Activated CD4-positive, alpha-beta memory T cell treated with anti-CD3 and anti-CD28 coated beads, Interleukin-2, amount 10 ng/mL, durations not matched to agents 7 days and 5 days (primary cell): ENCODE measurements at regions of chr13 and their contacts with region 1.

Region 1: DNA sequence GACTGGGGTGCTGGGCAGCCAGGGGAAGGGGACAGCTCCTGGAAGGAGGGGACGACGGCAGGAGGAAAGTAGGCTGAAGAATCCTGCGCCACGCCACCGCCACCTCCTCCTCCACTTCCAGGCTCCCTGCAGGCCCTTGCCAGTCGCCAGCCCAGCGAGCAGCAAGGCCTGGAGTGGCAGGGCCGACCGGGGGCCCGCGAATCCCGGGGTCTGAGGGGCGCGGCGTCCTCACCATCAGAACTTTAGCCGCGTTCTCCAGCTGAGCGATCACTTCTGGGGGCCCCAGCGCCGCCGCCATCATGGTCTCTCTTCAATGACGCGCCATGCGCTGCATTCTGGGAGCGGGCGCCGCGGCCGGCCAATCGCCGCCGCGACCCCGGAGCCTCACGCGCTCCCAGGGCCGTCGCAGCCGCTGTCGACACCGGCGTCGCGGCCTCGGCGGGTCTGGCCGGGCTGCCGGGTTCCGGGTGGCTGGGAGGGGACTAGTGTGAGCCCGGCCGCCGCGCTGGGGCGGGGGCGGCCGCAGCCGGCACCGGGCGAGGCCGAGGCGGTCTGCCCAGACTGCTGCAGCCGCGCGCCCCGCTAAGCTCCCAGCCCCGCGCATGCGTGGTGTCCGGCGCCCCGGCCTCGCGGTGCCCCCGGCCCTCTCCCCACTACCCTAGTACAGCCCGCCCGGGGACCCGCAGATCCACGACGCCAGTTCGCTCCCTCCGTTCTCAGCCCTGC is at the start of gene XPO4:
- DNase-seq: peak; percentile 86
- H3K4me3 Mint-ChIP-seq: peak within 1 kb of the TSS; percentile 92
- H3K27ac Mint-ChIP-seq: peak within 1 kb of the TSS; percentile 89
- H3K4me1 Mint-ChIP-seq: peaks cover 36% of the 10 kb centered on the region
- H3K27me3 Mint-ChIP-seq: no peaks in the 10 kb centered on the region
- total RNA-seq, gene XPO4: 16.4 to 16.8 TPM

Region 2: DNA sequence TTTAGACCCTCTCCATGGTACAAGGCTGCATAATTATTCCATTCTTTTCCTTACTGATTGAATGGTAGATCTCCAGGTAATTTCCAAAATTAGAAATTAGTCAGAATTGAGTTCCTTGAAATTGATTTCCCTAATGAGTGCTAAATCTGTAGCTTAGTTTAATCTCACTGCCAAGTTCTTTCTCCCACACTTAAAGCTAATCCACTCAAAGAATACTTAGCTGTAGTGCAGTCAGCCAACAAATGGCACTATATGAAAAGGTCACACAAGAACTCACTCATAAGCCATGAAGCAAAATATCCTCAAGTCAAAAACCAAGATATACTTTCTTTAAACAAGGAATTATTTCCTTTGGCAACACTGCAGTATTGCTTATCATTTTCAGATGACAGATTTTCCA is 62.0 kb before region 1 on chr13:
- CTCF ChIA-PET with region 1: no interaction called
- POLR2A ChIA-PET with region 1: no interaction called
- DNase-seq: no peak
- H3K4me3 Mint-ChIP-seq: no peak overlapping the region
- H3K27ac Mint-ChIP-seq: no peak overlapping the region
- H3K4me1 Mint-ChIP-seq: peaks cover 3% of the 10 kb centered on the region
- H3K27me3 Mint-ChIP-seq: no peaks in the 10 kb centered on the region

Region 3: DNA sequence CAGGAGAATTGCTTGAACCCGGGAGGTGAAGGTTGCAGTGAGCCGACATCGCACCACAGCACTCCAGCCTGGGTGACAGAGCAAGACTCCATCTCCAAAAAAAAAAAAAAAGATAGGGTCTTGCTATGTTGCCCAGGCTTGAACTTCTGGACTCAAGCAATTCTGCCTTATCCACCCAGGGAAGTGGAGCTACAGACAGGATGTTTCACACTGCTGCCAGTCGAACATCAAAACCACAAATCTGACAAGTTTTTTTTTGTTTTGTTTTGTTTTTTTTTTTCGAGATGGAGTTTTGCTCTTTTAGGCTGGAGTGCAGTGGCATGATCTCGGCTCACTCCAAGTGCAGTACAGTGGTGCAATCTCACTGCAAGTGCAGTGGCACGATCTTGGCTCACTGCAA is 10.8 kb before region 1 on chr13:
- CTCF ChIA-PET with region 1: interaction called, 5 read pairs
- POLR2A ChIA-PET with region 1: interaction called, 31 read pairs
- DNase-seq: no peak
- H3K4me3 Mint-ChIP-seq: no peak overlapping the region
- H3K27ac Mint-ChIP-seq: peak overlapping the region; percentile 12
- H3K4me1 Mint-ChIP-seq: peaks cover 18% of the 10 kb centered on the region
- H3K27me3 Mint-ChIP-seq: no peaks in the 10 kb centered on the region

Region 4: DNA sequence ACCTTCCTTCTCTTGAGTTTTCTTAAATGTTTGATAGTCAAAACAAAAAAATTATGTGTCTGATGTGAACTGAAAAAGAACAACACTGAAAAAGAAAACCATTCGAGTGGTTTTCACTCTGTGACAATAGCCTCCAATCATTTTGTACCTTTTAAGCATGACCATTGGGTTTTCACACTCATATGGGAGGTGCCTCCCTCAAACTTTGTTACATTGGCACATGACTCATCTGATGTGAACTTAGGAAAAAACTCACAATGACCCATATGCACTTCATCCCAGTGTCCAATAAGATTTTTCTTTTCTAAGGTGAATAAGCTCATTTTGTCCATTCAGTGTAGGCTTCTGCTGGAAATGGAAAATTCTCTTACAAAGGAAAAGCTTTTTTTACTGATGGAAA is 66.6 kb after region 1 on chr13:
- CTCF ChIA-PET with region 1: no interaction called
- POLR2A ChIA-PET with region 1: no interaction called
- DNase-seq: no peak
- H3K4me3 Mint-ChIP-seq: peak overlapping the region; percentile 19
- H3K27ac Mint-ChIP-seq: peak overlapping the region; percentile 45
- H3K4me1 Mint-ChIP-seq: peaks cover 14% of the 10 kb centered on the region
- H3K27me3 Mint-ChIP-seq: peaks cover 6% of the 10 kb centered on the region

Region 5: DNA sequence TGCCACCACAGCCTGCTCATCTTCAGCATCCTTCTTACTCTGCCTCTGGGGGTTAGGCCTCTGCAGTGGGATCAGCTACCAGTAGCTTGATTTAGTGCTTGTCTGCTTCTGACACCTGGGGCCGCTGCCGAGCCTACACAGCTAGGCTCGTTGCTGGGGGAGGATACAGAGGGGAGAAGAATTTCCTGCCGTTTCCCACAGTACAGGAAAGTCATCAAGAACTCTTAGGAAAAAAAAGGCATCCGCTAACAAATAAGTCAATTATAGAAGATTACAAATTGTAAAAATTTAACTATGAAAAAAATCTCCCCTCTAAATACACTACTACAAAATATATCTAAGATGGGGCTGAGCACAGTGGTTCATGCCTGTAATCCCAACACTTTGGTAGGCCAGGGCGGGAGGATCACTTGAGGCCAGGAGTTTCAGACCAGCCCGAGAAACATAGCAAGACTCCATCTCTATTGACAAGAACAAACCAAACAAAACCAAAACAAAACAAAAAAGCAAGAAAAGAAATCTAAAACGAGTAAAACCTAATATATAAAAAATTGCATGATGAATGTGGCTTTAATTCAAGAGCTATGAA is 132.1 kb after region 1 on chr13:
- CTCF ChIA-PET with region 1: no interaction called
- POLR2A ChIA-PET with region 1: no interaction called
- DNase-seq: no peak
- H3K4me3 Mint-ChIP-seq: no peak overlapping the region
- H3K27ac Mint-ChIP-seq: no peak overlapping the region
- H3K4me1 Mint-ChIP-seq: peaks cover 22% of the 10 kb centered on the region
- H3K27me3 Mint-ChIP-seq: no peaks in the 10 kb centered on the region